Sigmoid colon (tissue), 7 donors: ENCODE measurements at regions of chr1 and their contacts with region 1.

Region 1: GRCh38 chr1:42335050-42335808 is at the start of gene FOXJ3:
- DNase-seq: peak; percentile 95
- H3K4me3 ChIP-seq: peak within 1 kb of the TSS; percentile 80 to 97 (median 89)
- H3K27ac ChIP-seq: peak within 1 kb of the TSS; percentile 92 to 97 (median 96)
- H3K4me1 ChIP-seq: peaks cover 0 to 37% (median 32%) of the 10 kb centered on the region in 4 donors
- H3K27me3 ChIP-seq: no peaks in the 10 kb centered on the region
- CTCF ChIP-seq: no peak
- EP300 ChIP-seq: no peak
- POLR2A ChIP-seq: peak; percentile 28
- total RNA-seq, gene FOXJ3: 39.9 to 53.8 (median 47.4) TPM

Region 2: GRCh38 chr1:42173155-42173933 is 161.9 kb before region 1 on chr1:
- intact Hi-C with region 1: loop called (anchors 5 kb)
- DNase-seq: peak; percentile 77
- H3K4me3 ChIP-seq: no peak overlapping the region
- H3K27ac ChIP-seq: peak overlapping the region; percentile 12 to 67 (median 48)
- H3K4me1 ChIP-seq: peaks cover 0 to 27% (median 15%) of the 10 kb centered on the region in 4 donors
- H3K27me3 ChIP-seq: no peaks in the 10 kb centered on the region
- CTCF ChIP-seq: peak; percentile 66 to 97 (median 91)
- EP300 ChIP-seq: no peak
- POLR2A ChIP-seq: no peak

Region 3: GRCh38 chr1:42221952-42222606 is 113.2 kb before region 1 on chr1:
- intact Hi-C with region 1: no loop called
- DNase-seq: no peak
- H3K4me3 ChIP-seq: no peak overlapping the region
- H3K27ac ChIP-seq: no peak overlapping the region
- H3K4me1 ChIP-seq: peaks cover 0 to 22% (median 12%) of the 10 kb centered on the region in 4 donors
- H3K27me3 ChIP-seq: no peaks in the 10 kb centered on the region
- CTCF ChIP-seq: no peak
- EP300 ChIP-seq: no peak
- POLR2A ChIP-seq: no peak

Region 4: DNA sequence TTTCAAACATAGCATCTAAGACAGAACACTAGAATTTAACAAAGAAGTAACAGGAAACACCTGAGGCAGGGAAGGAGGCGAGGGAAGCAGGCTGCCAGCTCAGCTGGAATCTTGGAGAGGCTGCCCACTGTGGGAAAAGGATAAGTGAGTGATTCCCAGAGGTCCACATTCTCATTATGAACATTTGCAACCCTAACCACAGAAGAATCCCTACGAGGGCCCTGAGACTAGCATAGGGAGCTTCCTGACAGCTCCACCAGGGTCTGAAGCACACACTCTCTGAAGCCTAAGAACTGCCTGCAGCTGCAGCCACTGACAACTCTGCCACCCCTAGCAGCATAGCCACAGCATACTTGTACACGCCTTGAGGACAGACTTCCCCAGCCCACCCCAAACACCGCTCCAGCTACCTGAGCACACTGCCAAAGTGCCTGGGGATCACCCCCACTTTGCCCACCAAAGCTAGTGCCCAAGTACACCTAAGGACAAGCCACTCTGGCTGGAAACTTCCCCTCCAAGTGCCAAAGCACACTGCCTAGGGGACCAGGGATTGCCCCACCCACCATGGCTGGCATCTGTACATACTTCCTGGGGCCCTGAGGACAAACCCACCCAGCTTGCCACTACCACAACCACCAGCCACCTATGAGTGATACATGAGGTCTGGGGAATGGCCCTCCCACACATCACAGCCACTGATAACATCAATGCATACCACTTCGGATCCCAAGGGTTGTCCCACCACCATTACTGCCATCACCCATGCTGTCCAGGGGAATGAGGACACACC is 94.1 kb before region 1 on chr1:
- intact Hi-C with region 1: no loop called
- DNase-seq: no peak
- H3K4me3 ChIP-seq: no peak overlapping the region
- H3K27ac ChIP-seq: no peak overlapping the region
- H3K4me1 ChIP-seq: peaks cover 0 to 4% (median 2%) of the 10 kb centered on the region in 4 donors
- H3K27me3 ChIP-seq: no peaks in the 10 kb centered on the region
- CTCF ChIP-seq: no peak
- EP300 ChIP-seq: no peak
- POLR2A ChIP-seq: no peak

Region 5: DNA sequence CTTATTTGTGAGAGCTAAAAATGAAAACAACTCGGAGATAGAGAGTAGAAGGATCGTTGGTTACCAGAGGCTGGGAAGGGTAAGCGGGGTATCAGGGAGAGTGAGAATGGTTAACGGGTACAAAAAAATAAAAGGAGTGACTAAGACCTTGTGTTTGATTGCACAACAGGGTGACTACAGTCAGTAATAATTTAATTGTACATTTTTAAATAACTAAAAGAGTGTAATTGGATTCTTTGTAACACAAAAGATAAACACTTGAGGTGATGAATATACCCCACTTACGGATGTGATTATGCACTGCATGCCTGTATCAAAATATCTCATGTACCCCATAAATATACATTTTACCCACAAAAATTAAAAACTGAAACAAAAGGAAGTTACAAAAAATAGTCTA is 29.6 kb before region 1 on chr1:
- intact Hi-C with region 1: no loop called
- DNase-seq: no peak
- H3K4me3 ChIP-seq: no peak overlapping the region
- H3K27ac ChIP-seq: no peak overlapping the region
- H3K4me1 ChIP-seq: no peaks in the 10 kb centered on the region
- H3K27me3 ChIP-seq: no peaks in the 10 kb centered on the region
- CTCF ChIP-seq: no peak
- EP300 ChIP-seq: no peak
- POLR2A ChIP-seq: no peak

Region 6: GRCh38 chr1:42420911-42421585 is 85.8 kb after region 1 on chr1:
- intact Hi-C with region 1: loop called (anchors 2 kb)
- DNase-seq: peak; percentile 90
- H3K4me3 ChIP-seq: no peak overlapping the region
- H3K27ac ChIP-seq: peak overlapping the region in 3 of 4 donors; percentile 74 to 87 (median 80)
- H3K4me1 ChIP-seq: peaks cover 0 to 38% (median 34%) of the 10 kb centered on the region in 4 donors
- H3K27me3 ChIP-seq: no peaks in the 10 kb centered on the region
- CTCF ChIP-seq: no peak
- EP300 ChIP-seq: peak in 3 of 4 donors; percentile 29 to 93 (median 80)
- POLR2A ChIP-seq: no peak

Region 7: DNA sequence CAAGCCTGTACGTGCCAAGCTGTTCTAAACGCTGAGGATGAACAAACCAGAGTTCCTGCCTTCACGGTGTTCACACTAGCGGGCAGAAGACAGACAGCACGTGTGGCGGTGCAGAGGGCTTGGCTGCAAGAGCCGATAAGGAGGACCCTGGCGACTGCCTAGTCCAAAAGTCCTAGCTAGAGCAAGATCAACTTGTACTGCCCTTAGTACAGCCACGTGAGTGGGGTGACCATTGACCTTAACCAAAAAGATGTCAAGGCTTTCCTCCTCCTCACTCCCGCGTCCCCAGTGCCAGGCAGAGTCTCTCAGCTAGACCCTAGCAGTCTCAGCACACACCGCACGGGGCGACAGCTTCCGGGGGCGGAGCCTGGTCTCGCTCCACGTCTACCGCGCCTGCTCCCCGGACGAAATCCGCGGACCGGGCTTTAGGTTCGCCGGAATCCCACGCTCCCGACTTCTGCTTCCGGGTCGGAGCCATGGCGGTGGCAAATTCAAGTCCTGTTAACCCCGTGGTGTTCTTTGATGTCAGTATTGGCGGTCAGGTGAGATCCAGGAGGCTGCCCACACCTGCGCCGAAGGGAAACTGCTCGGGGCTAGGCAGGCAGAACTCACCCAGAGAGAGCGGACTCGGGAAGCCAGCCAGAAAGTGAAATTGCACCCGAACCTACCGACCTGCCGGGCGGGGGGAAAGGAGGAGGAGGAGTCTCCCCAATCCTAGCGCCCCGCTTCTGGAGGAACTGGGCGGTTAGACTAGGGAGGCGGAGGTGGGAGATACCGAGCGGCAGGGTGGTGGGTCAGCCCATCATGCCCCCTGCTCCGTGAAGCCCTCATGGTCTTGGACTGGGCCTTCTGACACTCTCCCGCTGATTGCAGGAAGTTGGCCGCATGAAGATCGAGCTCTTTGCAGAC is 323.0 kb after region 1 on chr1 and contains the start of gene PPIH:
- intact Hi-C with region 1: loop called (anchors 10 kb)
- DNase-seq: peak; percentile 96
- H3K4me3 ChIP-seq: peak within 1 kb of the TSS; percentile 63 to 91 (median 74)
- H3K27ac ChIP-seq: peak within 1 kb of the TSS; percentile 69 to 84 (median 82)
- H3K4me1 ChIP-seq: peaks cover 0 to 20% (median 16%) of the 10 kb centered on the region in 4 donors
- H3K27me3 ChIP-seq: no peaks in the 10 kb centered on the region
- CTCF ChIP-seq: peak; percentile 9 to 55 (median 36)
- EP300 ChIP-seq: peak in 1 of 4 donors; percentile 48
- POLR2A ChIP-seq: peak in 1 of 2 donors; percentile 46
- total RNA-seq, gene PPIH: 19.7 to 32.9 (median 27.5) TPM